Activated CD4-positive, alpha-beta T cell treated with anti-CD3 and anti-CD28 coated beads for 36 hours (primary cell): ENCODE measurements at regions of chr10 and their contacts with region 1.

Region 1: DNA sequence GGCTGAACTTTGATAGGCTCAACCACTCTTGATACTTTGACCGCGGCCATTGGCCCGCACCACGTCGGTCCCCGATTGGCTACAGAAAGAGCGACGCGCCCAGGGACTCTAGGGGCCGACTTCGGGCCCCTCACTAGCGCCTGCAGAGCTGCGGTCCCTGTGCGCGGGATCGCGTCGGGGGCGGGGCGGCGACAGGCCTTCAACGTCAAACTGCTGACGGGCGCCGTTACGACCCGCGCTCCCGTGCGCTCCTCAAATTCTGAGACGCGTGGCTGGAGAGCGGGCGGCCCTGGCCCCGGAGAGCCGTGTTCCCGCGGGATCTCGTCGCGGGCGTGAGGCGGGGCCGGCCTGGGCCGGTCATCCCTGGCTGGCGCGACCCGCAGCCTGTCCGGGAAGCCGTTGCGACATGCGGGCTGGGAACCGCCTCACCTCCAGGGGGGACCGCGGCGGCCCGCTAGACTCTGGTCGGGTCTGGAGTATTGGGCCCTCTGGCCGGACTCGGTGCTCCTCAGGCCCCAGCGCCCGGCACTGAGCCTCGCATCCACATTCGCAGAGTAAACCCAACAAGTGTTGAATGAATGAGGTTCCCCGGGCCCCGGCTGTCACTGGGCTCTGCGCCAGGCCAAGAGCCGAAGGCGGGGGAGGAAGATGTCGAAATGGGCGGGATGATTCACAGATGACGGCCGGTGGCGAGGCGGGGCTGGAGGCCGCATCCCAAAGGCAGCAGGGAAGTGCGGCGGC is 644 bp upstream of the SLC25A28 start:
- DNase-seq: peak; percentile 94
- ATAC-seq: peak; percentile 89
- H3K4me3 Mint-ChIP-seq: peak overlapping the region; percentile 96
- H3K27ac Mint-ChIP-seq: peak overlapping the region; percentile 96
- H3K4me1 Mint-ChIP-seq: peaks cover 39% of the 10 kb centered on the region
- H3K27me3 Mint-ChIP-seq: no peaks in the 10 kb centered on the region

Region 2: DNA sequence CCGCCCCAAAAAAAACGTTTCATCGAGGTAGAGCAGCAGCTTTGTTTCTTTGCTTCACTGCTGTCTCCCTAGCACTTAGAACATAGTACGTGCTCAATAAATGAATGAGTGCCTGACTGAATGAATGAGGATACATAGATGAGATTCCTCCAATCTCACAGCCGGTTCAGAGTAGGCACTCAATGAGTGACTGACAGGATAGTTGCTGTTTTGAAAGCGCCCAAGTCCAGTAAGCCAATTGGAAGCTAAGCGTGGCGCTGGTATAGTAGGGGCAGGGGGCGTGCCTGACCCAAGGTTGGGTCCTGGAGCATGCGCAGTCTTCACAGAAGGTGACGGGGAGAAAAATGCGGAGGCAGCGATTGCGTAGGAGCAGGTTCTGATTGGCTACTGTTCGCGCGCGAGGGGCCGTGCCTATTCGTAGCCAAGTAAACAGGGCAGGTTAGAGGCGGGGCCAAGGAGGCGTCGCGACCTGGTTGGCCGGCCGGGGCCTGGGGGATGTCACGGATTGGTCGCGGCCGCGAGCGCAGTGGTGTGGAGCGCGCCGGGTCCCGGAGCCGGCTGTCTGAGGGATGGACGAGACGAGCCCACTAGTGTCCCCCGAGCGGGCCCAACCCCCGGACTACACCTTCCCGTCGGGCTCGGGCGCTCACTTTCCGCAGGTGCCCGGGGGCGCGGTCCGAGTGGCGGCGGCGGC is 1980.6 kb before region 1 on chr10 and contains the start of gene PI4K2A:
- CTCF ChIA-PET with region 1: no interaction called
- POLR2A ChIA-PET with region 1: no interaction called
- intact Hi-C with region 1: loop called in 1 of 2 experiments (anchors 10 kb)
- DNase-seq: peak; percentile 100
- ATAC-seq: peak; percentile 99
- H3K4me3 Mint-ChIP-seq: peak within 1 kb of the TSS; percentile 97
- H3K27ac Mint-ChIP-seq: peak within 1 kb of the TSS; percentile 93
- H3K4me1 Mint-ChIP-seq: peaks cover 18% of the 10 kb centered on the region
- H3K27me3 Mint-ChIP-seq: no peaks in the 10 kb centered on the region
- total RNA-seq, gene PI4K2A: 8.5 to 8.9 TPM

Region 3: GRCh38 chr10:98446661-98447221 is 1174.1 kb before region 1 on chr10 and contains the start of gene HPS1:
- CTCF ChIA-PET with region 1: no interaction called
- POLR2A ChIA-PET with region 1: no interaction called
- intact Hi-C with region 1: loop called in 1 of 2 experiments (anchors 10 kb)
- DNase-seq: peak; percentile 92
- ATAC-seq: peak; percentile 93
- H3K4me3 Mint-ChIP-seq: peak within 1 kb of the TSS; percentile 93
- H3K27ac Mint-ChIP-seq: peak within 1 kb of the TSS; percentile 88
- H3K4me1 Mint-ChIP-seq: peaks cover 39% of the 10 kb centered on the region
- H3K27me3 Mint-ChIP-seq: peaks cover 5% of the 10 kb centered on the region
- total RNA-seq, gene HPS1: 51.9 to 53.2 TPM

Region 4: GRCh38 chr10:99633824-99634223 is 12.9 kb after region 1 on chr10:
- CTCF ChIA-PET with region 1: no interaction called
- POLR2A ChIA-PET with region 1: no interaction called
- intact Hi-C with region 1: no loop called
- DNase-seq: no peak
- ATAC-seq: no peak
- H3K4me3 Mint-ChIP-seq: no peak overlapping the region
- H3K27ac Mint-ChIP-seq: no peak overlapping the region
- H3K4me1 Mint-ChIP-seq: no peaks in the 10 kb centered on the region
- H3K27me3 Mint-ChIP-seq: peaks cover 15% of the 10 kb centered on the region

Region 5: GRCh38 chr10:99659031-99659867 is 38.4 kb after region 1 on chr10 and contains the start of gene ENTPD7:
- CTCF ChIA-PET with region 1: interaction called, 11 read pairs
- POLR2A ChIA-PET with region 1: interaction called, 30 read pairs
- intact Hi-C with region 1: loop called (anchors 1 kb)
- DNase-seq: peak; percentile 96
- ATAC-seq: peak; percentile 99
- H3K4me3 Mint-ChIP-seq: peak within 1 kb of the TSS; percentile 84
- H3K27ac Mint-ChIP-seq: peak within 1 kb of the TSS; percentile 85
- H3K4me1 Mint-ChIP-seq: peaks cover 22% of the 10 kb centered on the region
- H3K27me3 Mint-ChIP-seq: peaks cover 12% of the 10 kb centered on the region
- total RNA-seq, gene ENTPD7: 2.5 to 2.7 TPM

Region 6: GRCh38 chr10:100009793-100010676 is 389.2 kb after region 1 on chr10 and contains the start of gene DNMBP:
- CTCF ChIA-PET with region 1: no interaction called
- POLR2A ChIA-PET with region 1: no interaction called
- intact Hi-C with region 1: loop called in 1 of 2 experiments (anchors 5 kb)
- DNase-seq: peak; percentile 91
- ATAC-seq: peak; percentile 91
- H3K4me3 Mint-ChIP-seq: peak within 1 kb of the TSS; percentile 74
- H3K27ac Mint-ChIP-seq: peak within 1 kb of the TSS; percentile 79
- H3K4me1 Mint-ChIP-seq: peaks cover 46% of the 10 kb centered on the region
- H3K27me3 Mint-ChIP-seq: peaks cover 8% of the 10 kb centered on the region
- total RNA-seq, gene DNMBP: 1.9 to 2.4 TPM